ENCODE measurements at regions of chr11 and their contacts with region 1.

Region 1: DNA sequence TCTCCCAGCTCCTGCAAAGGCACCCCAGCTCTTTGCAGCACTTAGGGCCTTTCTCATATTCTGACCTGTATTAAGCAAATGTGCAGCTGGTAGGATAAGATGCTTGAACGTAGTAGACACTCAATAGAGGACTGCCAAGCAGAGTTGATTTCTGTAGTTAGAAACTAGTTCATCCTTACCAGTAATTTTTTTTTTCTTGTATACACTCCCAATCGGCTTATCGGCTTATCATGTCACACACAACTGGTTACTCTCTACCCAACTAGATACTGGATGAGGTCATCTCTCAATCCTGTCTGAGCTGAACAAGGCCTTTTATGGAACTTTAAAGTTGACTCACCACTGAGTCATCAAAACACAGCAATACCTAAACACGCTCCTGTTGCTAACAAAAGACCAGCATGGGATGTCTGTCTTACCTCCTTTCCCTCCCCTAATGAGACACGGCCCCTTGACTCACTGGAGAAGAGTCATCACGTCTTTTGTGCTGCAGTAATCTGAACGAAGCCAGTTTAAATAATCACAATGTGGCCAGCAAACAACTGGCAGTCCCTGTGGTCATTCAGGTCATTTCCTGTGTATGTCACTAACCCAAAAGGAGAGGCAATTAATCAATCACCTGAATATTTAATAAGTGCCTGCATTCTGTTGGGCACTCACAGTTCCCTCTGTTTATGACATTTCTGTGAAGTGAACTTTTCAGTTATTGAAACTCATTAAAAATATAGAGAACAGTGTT is 7.5 kb upstream of the WEE1 start:
- DNase-seq: peak; percentile 99
- H3K4me3 Mint-ChIP-seq: no peak overlapping the region
- H3K27ac Mint-ChIP-seq: peak overlapping the region; percentile 100
- H3K4me1 Mint-ChIP-seq: peaks cover 43% of the 10 kb centered on the region
- H3K27me3 Mint-ChIP-seq: no peaks in the 10 kb centered on the region
- CTCF ChIP-seq: no peak

Region 2: GRCh38 chr11:9470765-9471164 is 95.2 kb before region 1 on chr11:
- CTCF ChIA-PET with region 1: no interaction called
- POLR2A ChIA-PET with region 1: no interaction called
- intact Hi-C with region 1: no loop called
- DNase-seq: no peak
- H3K4me3 Mint-ChIP-seq: no peak overlapping the region
- H3K27ac Mint-ChIP-seq: no peak overlapping the region
- H3K4me1 Mint-ChIP-seq: no peaks in the 10 kb centered on the region
- H3K27me3 Mint-ChIP-seq: no peaks in the 10 kb centered on the region
- CTCF ChIP-seq: no peak

Region 3: GRCh38 chr11:9534791-9535781 is 30.9 kb before region 1 on chr11:
- CTCF ChIA-PET with region 1: interaction called, 8 read pairs
- POLR2A ChIA-PET with region 1: interaction called, 4 read pairs
- intact Hi-C with region 1: loop called (anchors 2 kb)
- DNase-seq: peak; percentile 94
- H3K4me3 Mint-ChIP-seq: no peak overlapping the region
- H3K27ac Mint-ChIP-seq: peak overlapping the region; percentile 49
- H3K4me1 Mint-ChIP-seq: no peaks in the 10 kb centered on the region
- H3K27me3 Mint-ChIP-seq: no peaks in the 10 kb centered on the region
- CTCF ChIP-seq: peak; percentile 91

Measured in MCF 10A (cell line).